T-cell (primary cell): ENCODE measurements at regions of chr16 and their contacts with region 1.

Region 1: GRCh38 chr16:25925421-25925820 is 233.7 kb downstream of the HS3ST4 start:
- DNase-seq: no peak
- ATAC-seq: no peak
- H3K4me3 ChIP-seq: no peak overlapping the region
- H3K4me3 Mint-ChIP-seq: no peak overlapping the region
- H3K27ac ChIP-seq: no peak overlapping the region
- H3K27ac Mint-ChIP-seq: no peak overlapping the region
- H3K4me1 ChIP-seq: no peaks in the 10 kb centered on the region
- H3K4me1 Mint-ChIP-seq: no peaks in the 10 kb centered on the region
- H3K27me3 ChIP-seq: peaks cover 0 to 4% of the 10 kb centered on the region in 2 experiments
- H3K27me3 Mint-ChIP-seq: peaks cover 6 to 13% of the 10 kb centered on the region in 2 donors

Region 2: DNA sequence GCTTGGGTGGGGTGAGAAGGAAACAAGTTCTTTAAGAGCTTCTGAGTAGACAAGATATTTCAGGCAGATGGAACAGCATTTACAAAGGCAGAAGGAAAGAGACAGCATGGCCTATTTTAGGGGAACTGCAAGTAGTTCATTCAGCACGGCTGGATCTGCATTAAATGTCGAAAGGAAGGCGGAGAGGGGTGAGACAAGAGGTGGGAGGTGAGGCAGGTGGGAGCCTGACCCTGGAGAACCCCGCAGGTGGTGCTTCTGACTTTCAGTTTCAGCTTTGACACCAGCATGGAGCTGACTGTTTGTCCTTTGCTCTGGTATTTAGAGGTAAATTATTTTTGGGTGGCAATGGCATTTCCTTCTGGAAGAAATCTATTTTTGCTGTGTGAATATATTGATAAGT is 38.8 kb before region 1 on chr16:
- CTCF ChIA-PET with region 1: interaction called in 1 of 2 experiments, 13 read pairs
- POLR2A ChIA-PET with region 1: no interaction called
- DNase-seq: no peak
- ATAC-seq: no peak
- H3K4me3 ChIP-seq: no peak overlapping the region
- H3K4me3 Mint-ChIP-seq: no peak overlapping the region
- H3K27ac ChIP-seq: no peak overlapping the region
- H3K27ac Mint-ChIP-seq: no peak overlapping the region
- H3K4me1 ChIP-seq: no peaks in the 10 kb centered on the region
- H3K4me1 Mint-ChIP-seq: no peaks in the 10 kb centered on the region
- H3K27me3 ChIP-seq: peaks cover 0 to 2% of the 10 kb centered on the region in 2 experiments
- H3K27me3 Mint-ChIP-seq: peaks cover 8 to 13% of the 10 kb centered on the region in 2 donors

Region 3: GRCh38 chr16:25912321-25912720 is 13.1 kb before region 1 on chr16:
- CTCF ChIA-PET with region 1: no interaction called
- POLR2A ChIA-PET with region 1: no interaction called
- DNase-seq: no peak
- ATAC-seq: no peak
- H3K4me3 ChIP-seq: no peak overlapping the region
- H3K4me3 Mint-ChIP-seq: no peak overlapping the region
- H3K27ac ChIP-seq: no peak overlapping the region
- H3K27ac Mint-ChIP-seq: no peak overlapping the region
- H3K4me1 ChIP-seq: no peaks in the 10 kb centered on the region
- H3K4me1 Mint-ChIP-seq: no peaks in the 10 kb centered on the region
- H3K27me3 ChIP-seq: peaks cover 0 to 3% of the 10 kb centered on the region in 2 experiments
- H3K27me3 Mint-ChIP-seq: peaks cover 3 to 5% of the 10 kb centered on the region in 2 donors

Region 4: GRCh38 chr16:26005336-26005735 is 79.9 kb after region 1 on chr16:
- CTCF ChIA-PET with region 1: no interaction called
- POLR2A ChIA-PET with region 1: no interaction called
- DNase-seq: no peak
- ATAC-seq: no peak
- H3K4me3 ChIP-seq: no peak overlapping the region
- H3K4me3 Mint-ChIP-seq: no peak overlapping the region
- H3K27ac ChIP-seq: no peak overlapping the region
- H3K27ac Mint-ChIP-seq: no peak overlapping the region
- H3K4me1 ChIP-seq: no peaks in the 10 kb centered on the region
- H3K4me1 Mint-ChIP-seq: no peaks in the 10 kb centered on the region
- H3K27me3 ChIP-seq: peaks cover 0 to 2% of the 10 kb centered on the region in 2 experiments
- H3K27me3 Mint-ChIP-seq: peaks cover 9 to 19% of the 10 kb centered on the region in 2 donors